Aorta (tissue), 5 donors: ENCODE measurements at regions of chr6 and their contacts with region 1.

Region 1: DNA sequence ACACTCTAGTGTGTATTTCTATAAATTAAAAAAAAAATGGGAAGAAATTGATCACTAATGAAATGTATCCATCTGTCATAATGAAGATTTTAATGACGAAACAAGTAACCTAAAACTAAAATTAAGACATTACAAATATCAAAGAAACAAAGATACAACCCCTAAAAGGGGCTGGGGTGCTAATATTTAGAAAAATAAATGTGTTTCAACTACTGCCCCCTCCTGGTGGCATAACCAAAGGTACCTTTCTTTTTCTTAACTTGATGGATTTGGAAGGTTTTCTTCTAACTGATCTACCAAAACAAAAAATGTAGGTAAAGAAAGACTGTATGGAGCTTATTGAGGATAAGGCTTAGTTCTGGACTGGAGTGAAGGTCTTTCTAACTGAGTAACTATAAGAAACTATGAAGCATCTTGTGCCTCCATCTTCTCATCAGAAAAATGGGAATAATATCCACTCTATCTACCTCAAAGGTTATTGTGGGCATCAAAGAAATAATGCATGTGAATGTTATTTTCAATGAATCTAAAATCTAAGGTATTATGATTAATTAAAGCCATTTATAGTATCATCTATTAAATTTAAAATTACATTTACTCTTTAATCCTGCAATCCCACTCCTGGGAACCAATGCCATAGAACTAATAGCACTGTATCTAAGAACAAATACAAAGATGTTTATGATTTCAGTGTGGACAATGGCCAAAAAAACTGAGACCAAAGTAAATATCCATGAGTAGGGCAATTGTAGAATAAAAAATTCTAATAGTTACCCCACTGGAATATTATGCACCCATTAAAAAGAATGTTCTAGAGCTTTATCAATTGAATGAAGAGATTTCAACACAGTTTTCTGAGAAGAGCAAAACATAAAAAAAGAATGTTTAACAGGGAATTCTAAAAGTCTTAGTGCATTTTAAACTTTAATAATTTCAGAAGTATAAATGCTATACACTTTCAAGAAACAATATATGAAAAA is 117.2 kb downstream of the BACH2 start:
- DNase-seq: no peak
- ATAC-seq: no peak
- H3K4me3 ChIP-seq: no peak overlapping the region
- H3K27ac ChIP-seq: no peak overlapping the region
- H3K4me1 ChIP-seq: peaks cover 9% of the 10 kb centered on the region in 2 donors
- H3K27me3 ChIP-seq: no peaks in the 10 kb centered on the region

Region 2: GRCh38 chr6:90008908-90009501 is 170.5 kb before region 1 on chr6:
- intact Hi-C with region 1: loop called in 1 of 2 experiments (anchors 10 kb)
- DNase-seq: no peak
- ATAC-seq: no peak
- H3K4me3 ChIP-seq: no peak overlapping the region
- H3K27ac ChIP-seq: peak overlapping the region; percentile 28 to 65
- H3K4me1 ChIP-seq: peaks cover 4 to 10% of the 10 kb centered on the region in 2 donors
- H3K27me3 ChIP-seq: no peaks in the 10 kb centered on the region